ENCODE measurements at regions of chr1 and their contacts with region 1.

Region 1: GRCh38 chr1:154272217-154272998 is at the start of gene HAX1:
- DNase-seq: peak; percentile 95 to 96
- H3K4me3 ChIP-seq: peak within 1 kb of the TSS; percentile 76
- H3K4me1 ChIP-seq: peaks cover 5% of the 10 kb centered on the region
- H3K27me3 ChIP-seq: no peaks in the 10 kb centered on the region

Region 2: DNA sequence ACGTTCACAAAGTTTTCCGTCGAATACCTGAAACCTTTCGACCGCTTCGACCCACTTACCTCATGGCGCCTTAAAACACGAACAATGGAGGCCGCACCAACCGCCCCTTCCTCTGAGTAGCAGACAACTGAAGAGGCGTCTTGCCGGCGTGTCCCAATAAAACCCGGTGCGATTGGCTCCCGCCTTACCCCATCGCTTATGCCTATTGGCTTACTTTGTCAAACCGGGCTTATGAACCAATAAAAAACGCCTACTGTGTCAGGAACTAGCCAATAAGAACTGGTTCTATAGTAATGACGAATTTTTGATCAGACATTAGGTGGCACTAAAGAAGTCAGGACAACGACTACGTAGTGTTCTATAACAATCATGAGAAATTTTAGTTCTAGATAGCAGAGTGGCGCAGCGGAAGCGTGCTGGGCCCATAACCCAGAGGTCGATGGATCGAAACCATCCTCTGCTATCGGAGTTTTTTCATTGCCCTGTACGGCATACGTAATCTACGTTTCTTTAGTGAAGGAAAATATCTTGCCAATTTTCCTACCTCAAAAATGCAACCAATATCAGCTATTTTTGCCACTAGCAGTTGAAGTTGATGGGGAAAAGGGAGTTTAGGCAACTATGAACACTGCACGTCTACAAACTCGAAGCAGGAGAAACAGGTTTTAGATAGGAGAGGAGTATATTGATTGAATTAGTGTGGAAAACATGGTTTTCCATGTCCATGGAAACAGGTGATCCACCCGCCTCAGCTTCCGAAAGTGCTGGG is 601.4 kb before region 1 on chr1 and contains the start of gene ILF2:
- in situ Hi-C with region 1: loop called (anchors 25 kb)
- DNase-seq: peak; percentile 98 to 100
- H3K4me3 ChIP-seq: peak within 1 kb of the TSS; percentile 72
- H3K4me1 ChIP-seq: no peaks in the 10 kb centered on the region
- H3K27me3 ChIP-seq: no peaks in the 10 kb centered on the region

Region 3: GRCh38 chr1:154104433-154105082 is 167.8 kb before region 1 on chr1:
- in situ Hi-C with region 1: no loop called
- DNase-seq: no peak
- H3K4me3 ChIP-seq: no peak overlapping the region
- H3K4me1 ChIP-seq: no peaks in the 10 kb centered on the region
- H3K27me3 ChIP-seq: no peaks in the 10 kb centered on the region

Region 4: GRCh38 chr1:154183045-154183915 is 89.1 kb before region 1 on chr1:
- in situ Hi-C with region 1: loop called (anchors 5 kb)
- DNase-seq: peak; percentile 98 to 99
- H3K4me3 ChIP-seq: peak overlapping the region; percentile 98
- H3K4me1 ChIP-seq: peaks cover 60% of the 10 kb centered on the region
- H3K27me3 ChIP-seq: no peaks in the 10 kb centered on the region

Region 5: DNA sequence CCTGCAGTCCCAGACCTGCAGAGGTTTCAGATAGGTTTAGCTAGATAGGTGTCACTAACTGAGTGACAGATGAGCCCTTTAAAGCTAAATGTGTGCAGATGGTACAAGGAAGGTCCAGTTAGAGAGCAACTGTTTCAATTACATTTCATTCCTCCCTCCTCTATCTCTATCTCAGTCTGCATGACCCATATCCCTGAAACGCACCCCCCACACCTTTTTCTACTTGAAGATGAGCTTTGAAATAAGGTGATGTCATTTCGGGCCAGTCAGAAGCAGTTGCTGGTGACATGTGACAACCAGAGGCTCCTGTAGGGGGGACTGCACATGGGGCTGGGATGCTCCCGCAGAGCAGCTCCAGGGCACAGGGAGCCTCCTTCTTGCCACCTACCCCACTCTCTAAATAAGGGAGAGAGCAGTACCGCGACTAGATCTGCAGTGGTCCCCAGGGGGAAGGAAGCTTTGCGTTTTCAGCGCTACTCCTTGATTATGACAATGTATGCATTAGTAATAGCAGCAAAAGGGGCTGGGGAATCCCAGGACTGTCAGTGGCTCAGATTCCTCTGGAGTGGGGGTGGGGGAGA is 57.2 kb after region 1 on chr1:
- in situ Hi-C with region 1: loop called (anchors 5 kb)
- DNase-seq: no peak
- H3K4me3 ChIP-seq: no peak overlapping the region
- H3K4me1 ChIP-seq: peaks cover 6% of the 10 kb centered on the region
- H3K27me3 ChIP-seq: no peaks in the 10 kb centered on the region